CD4-positive, alpha-beta T cell (primary cell): ENCODE measurements at regions of chr1 and their contacts with region 1.

Region 1: DNA sequence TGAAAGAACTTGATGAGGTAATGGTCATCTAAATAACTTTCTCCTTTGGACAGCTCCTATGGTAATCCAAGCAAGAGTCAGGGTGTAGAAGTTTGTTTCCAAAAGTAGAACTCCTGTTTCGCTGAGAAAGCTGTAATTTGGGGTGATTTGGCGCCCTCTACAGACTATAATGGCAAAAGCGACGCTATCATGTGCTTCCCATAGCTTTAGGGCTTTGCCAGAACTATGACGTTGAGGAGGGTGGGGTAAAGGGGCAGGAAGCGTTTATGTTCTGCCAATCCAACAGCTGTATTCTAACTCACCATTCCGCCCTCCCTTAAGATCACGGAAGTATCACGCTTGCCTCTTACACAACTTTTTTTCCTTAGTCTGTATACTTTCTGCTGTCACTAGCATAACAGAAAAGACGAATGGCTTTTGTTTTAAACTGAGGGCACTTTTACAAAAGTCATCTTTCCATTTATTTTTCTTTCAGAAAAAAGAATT is at the start of gene FMO4:
- DNase-seq: peak; percentile 57 to 97 (median 70)
- ATAC-seq: peak; percentile 100
- H3K4me3 ChIP-seq: peak within 1 kb of the TSS; percentile 41
- H3K4me3 Mint-ChIP-seq: peak within 1 kb of the TSS; percentile 66
- H3K27ac ChIP-seq: peak within 1 kb of the TSS in 1 of 2 donors; percentile 41
- H3K27ac Mint-ChIP-seq: peak within 1 kb of the TSS; percentile 81
- H3K4me1 ChIP-seq: no peaks in the 10 kb centered on the region
- H3K4me1 Mint-ChIP-seq: peaks cover 17% of the 10 kb centered on the region
- H3K27me3 ChIP-seq: no peaks in the 10 kb centered on the region
- H3K27me3 Mint-ChIP-seq: no peaks in the 10 kb centered on the region
- CTCF ChIP-seq: peak; percentile 78
- total RNA-seq, gene FMO4: 0.70 to 1.1 TPM

Region 2: DNA sequence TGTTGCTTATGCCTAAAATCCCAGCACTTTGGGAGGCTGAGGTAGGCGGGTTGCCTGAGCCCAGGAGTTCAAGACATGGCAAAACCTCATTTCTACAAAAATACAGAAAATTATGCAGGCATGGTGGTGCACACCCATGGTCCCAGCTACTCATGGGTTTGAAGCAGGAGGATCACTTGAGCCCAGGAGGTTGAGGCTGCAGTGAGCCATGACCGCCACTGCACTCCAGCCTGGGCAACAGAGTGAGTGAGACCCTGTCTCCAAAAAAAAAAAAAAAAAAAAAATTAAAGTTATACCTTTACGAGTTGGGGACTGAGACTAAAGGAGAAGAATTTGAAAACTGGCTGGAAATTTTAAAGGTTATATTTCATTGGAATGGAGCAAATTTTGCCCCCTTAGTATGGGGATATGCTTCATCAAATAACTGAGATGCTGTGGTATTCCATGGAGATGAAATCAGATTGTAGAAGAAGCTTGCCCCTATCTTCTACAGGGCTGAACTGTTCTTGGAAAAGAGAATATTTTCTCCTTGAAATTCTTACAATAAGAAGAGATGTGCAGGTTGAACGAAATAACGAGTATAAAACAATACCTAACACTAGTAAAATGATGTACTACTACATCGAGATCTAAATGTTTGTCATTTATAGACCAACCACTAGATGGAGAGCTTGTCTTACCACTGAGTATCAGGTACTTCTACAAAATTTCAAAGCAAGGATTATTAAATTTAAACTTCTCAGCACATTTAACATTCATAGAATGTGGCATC is 1385.3 kb before region 1 on chr1:
- CTCF ChIA-PET with region 1: no interaction called
- POLR2A ChIA-PET with region 1: no interaction called
- intact Hi-C with region 1: loop called (anchors 5 kb)
- DNase-seq: peak in 3 of 14 experiments; percentile 65 to 66 (median 66)
- ATAC-seq: peak; percentile 80
- H3K4me3 ChIP-seq: no peak overlapping the region
- H3K4me3 Mint-ChIP-seq: no peak overlapping the region
- H3K27ac ChIP-seq: no peak overlapping the region
- H3K27ac Mint-ChIP-seq: no peak overlapping the region
- H3K4me1 ChIP-seq: no peaks in the 10 kb centered on the region
- H3K4me1 Mint-ChIP-seq: peaks cover 10% of the 10 kb centered on the region
- H3K27me3 ChIP-seq: no peaks in the 10 kb centered on the region
- H3K27me3 Mint-ChIP-seq: no peaks in the 10 kb centered on the region
- CTCF ChIP-seq: peak; percentile 86

Region 3: GRCh38 chr1:170074250-170075157 is 1239.4 kb before region 1 on chr1 and contains the start of gene KIFAP3:
- CTCF ChIA-PET with region 1: interaction called, 6 read pairs
- POLR2A ChIA-PET with region 1: interaction called, 5 read pairs
- intact Hi-C with region 1: loop called in 1 of 2 experiments (anchors 10 kb)
- DNase-seq: peak; percentile 88 to 99 (median 93)
- ATAC-seq: peak; percentile 95
- H3K4me3 ChIP-seq: peak within 1 kb of the TSS; percentile 83
- H3K4me3 Mint-ChIP-seq: peak within 1 kb of the TSS; percentile 97
- H3K27ac ChIP-seq: peak within 1 kb of the TSS; percentile 77 to 83
- H3K27ac Mint-ChIP-seq: peak within 1 kb of the TSS; percentile 85
- H3K4me1 ChIP-seq: peaks cover 15% of the 10 kb centered on the region
- H3K4me1 Mint-ChIP-seq: peaks cover 54% of the 10 kb centered on the region
- H3K27me3 ChIP-seq: no peaks in the 10 kb centered on the region
- H3K27me3 Mint-ChIP-seq: no peaks in the 10 kb centered on the region
- CTCF ChIP-seq: peak; percentile 69
- total RNA-seq, gene KIFAP3: 12.1 to 12.6 TPM

Region 4: DNA sequence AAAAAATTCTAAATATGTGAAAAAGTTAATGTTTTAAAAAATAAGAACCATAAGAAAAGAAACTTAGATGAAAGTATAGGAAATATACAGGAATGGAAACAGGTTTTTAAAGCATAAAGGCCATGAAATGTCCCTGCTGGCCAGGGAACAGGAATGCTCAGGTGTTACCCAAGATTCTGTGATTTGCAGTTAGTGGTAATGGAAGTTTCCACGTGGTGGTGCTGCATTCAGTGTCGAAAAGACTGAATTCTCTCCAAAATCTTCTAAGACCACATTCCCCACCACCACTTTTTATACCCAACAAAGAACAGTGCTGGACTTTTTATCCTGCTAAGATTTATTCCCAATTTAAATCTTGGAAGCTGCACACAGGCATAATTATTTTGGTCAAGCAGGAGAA is 523.7 kb before region 1 on chr1:
- CTCF ChIA-PET with region 1: no interaction called
- POLR2A ChIA-PET with region 1: no interaction called
- intact Hi-C with region 1: no loop called
- DNase-seq: no peak
- ATAC-seq: no peak
- H3K4me3 ChIP-seq: no peak overlapping the region
- H3K4me3 Mint-ChIP-seq: no peak overlapping the region
- H3K27ac ChIP-seq: no peak overlapping the region
- H3K27ac Mint-ChIP-seq: no peak overlapping the region
- H3K4me1 ChIP-seq: no peaks in the 10 kb centered on the region
- H3K4me1 Mint-ChIP-seq: no peaks in the 10 kb centered on the region
- H3K27me3 ChIP-seq: no peaks in the 10 kb centered on the region
- H3K27me3 Mint-ChIP-seq: no peaks in the 10 kb centered on the region
- CTCF ChIP-seq: no peak

Region 5: GRCh38 chr1:170967042-170967910 is 346.6 kb before region 1 on chr1:
- CTCF ChIA-PET with region 1: interaction called, 11 read pairs
- POLR2A ChIA-PET with region 1: interaction called, 15 read pairs
- intact Hi-C with region 1: loop called (anchors 1 to 2 kb)
- DNase-seq: peak in 3 of 14 experiments; percentile 11 to 31 (median 25)
- ATAC-seq: peak; percentile 46
- H3K4me3 ChIP-seq: no peak overlapping the region
- H3K4me3 Mint-ChIP-seq: no peak overlapping the region
- H3K27ac ChIP-seq: no peak overlapping the region
- H3K27ac Mint-ChIP-seq: no peak overlapping the region
- H3K4me1 ChIP-seq: no peaks in the 10 kb centered on the region
- H3K4me1 Mint-ChIP-seq: no peaks in the 10 kb centered on the region
- H3K27me3 ChIP-seq: peaks cover 0 to 7% of the 10 kb centered on the region in 2 experiments
- H3K27me3 Mint-ChIP-seq: peaks cover 21% of the 10 kb centered on the region
- CTCF ChIP-seq: peak; percentile 40

Region 6: GRCh38 chr1:171781176-171781875 is 467.4 kb after region 1 on chr1 and contains the start of gene METTL13:
- CTCF ChIA-PET with region 1: no interaction called
- POLR2A ChIA-PET with region 1: no interaction called
- intact Hi-C with region 1: loop called in 1 of 2 experiments (anchors 5 kb)
- DNase-seq: peak; percentile 95 to 100 (median 98)
- ATAC-seq: peak; percentile 91
- H3K4me3 ChIP-seq: peak within 1 kb of the TSS; percentile 78
- H3K4me3 Mint-ChIP-seq: peak within 1 kb of the TSS; percentile 99
- H3K27ac ChIP-seq: peak within 1 kb of the TSS; percentile 63 to 75
- H3K27ac Mint-ChIP-seq: peak within 1 kb of the TSS; percentile 90
- H3K4me1 ChIP-seq: peaks cover 46% of the 10 kb centered on the region
- H3K4me1 Mint-ChIP-seq: peaks cover 47% of the 10 kb centered on the region
- H3K27me3 ChIP-seq: no peaks in the 10 kb centered on the region
- H3K27me3 Mint-ChIP-seq: no peaks in the 10 kb centered on the region
- CTCF ChIP-seq: no peak
- total RNA-seq, gene METTL13: 6.5 to 7.9 TPM